Activated CD4-positive, alpha-beta T cell treated with anti-CD3 and anti-CD28 coated beads for 36 hours (primary cell): ENCODE measurements at regions of chr12 and their contacts with region 1.

Region 1: GRCh38 chr12:124917135-124917840 is 2.8 kb upstream of the UBC start:
- DNase-seq: peak; percentile 97
- ATAC-seq: peak; percentile 69
- H3K4me3 Mint-ChIP-seq: peak overlapping the region; percentile 100
- H3K27ac Mint-ChIP-seq: peak overlapping the region; percentile 100
- H3K4me1 Mint-ChIP-seq: peaks cover 86% of the 10 kb centered on the region
- H3K27me3 Mint-ChIP-seq: no peaks in the 10 kb centered on the region

Region 2: DNA sequence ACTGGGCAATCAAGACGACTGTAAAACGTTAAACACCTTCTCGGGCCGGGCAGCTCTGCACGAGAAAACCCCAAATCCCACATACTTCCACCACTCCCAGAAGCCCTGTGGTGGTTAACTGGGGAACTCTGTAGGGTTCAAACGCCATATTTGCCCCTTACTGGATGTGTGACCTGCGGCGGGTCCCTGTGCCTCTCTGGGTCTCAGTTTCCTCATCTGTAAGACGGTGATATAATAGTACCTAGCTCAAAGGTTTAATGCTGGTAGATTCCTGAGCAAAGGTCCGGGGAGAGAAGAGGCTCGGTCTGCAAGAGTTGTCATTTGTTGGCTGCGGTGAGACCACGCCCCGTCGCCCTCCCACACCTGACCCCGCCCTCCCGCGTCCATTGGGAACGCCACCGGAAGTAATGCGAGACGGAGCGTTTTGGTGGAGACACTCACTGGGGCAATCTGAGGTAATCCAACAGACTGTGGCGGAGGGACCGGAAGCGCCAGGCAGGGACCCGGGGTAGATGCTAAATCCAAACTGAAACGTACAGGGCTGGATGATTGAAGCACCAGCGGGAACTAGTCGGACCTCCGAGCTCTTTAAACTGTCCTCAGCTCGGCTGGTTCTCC is 1942.9 kb before region 1 on chr12:
- CTCF ChIA-PET with region 1: no interaction called
- POLR2A ChIA-PET with region 1: no interaction called
- intact Hi-C with region 1: loop called in 1 of 2 experiments (anchors 10 kb)
- DNase-seq: peak; percentile 99
- ATAC-seq: peak; percentile 86
- H3K4me3 Mint-ChIP-seq: peak overlapping the region; percentile 95
- H3K27ac Mint-ChIP-seq: peak overlapping the region; percentile 100
- H3K4me1 Mint-ChIP-seq: peaks cover 21% of the 10 kb centered on the region
- H3K27me3 Mint-ChIP-seq: no peaks in the 10 kb centered on the region

Region 3: GRCh38 chr12:123972457-123973401 is 944.6 kb before region 1 on chr12 and contains the starts of genes CCDC92 and ZNF664:
- CTCF ChIA-PET with region 1: no interaction called
- POLR2A ChIA-PET with region 1: no interaction called
- intact Hi-C with region 1: loop called in 1 of 2 experiments (anchors 2 kb)
- DNase-seq: peak; percentile 98
- ATAC-seq: peak; percentile 87
- H3K4me3 Mint-ChIP-seq: peak within 1 kb of the TSS; percentile 87
- H3K27ac Mint-ChIP-seq: peak within 1 kb of the TSS; percentile 89
- H3K4me1 Mint-ChIP-seq: peaks cover 48% of the 10 kb centered on the region
- H3K27me3 Mint-ChIP-seq: no peaks in the 10 kb centered on the region
- total RNA-seq, gene CCDC92: 8.7 to 11.0 TPM
- total RNA-seq, gene ZNF664: 46.4 to 48.3 TPM

Region 4: DNA sequence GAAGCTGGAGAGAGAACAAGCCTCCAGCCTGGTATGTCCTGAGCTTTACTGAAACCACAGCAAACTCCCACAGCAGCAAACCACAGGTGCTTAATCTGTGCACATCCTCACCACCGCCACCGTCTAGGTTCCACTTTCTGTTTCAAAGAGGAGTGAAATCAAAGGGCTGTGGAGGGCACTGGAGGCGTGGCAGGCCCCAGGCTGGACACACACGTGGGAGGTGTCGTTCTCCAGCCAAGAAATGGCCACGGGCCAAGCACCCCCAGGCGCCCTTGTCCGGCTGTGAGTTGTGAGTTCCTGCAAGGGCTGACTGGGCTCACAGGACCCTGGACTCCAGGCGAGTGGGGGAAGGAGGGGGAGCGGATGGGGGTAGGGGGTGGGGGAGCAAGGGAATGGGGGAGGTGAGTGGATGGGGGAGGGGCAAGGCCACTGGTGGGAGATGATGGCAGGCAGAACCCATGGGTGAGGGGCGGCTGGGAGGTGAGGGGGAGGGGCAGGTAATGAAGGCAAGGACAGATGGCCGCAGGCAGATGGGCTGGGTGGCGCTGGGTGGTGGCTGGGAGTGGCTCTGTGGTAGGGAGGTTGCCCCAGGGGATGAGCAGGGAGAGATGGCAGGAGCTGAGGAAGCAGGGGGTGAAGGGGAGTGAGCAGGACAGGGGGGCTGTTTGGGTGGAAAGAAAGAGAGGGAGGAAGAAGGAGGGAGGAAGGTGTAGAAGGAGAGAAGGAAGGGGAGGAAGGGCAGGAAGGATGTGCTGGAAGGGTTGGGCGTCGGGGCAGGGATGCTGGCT is 436.6 kb before region 1 on chr12:
- CTCF ChIA-PET with region 1: no interaction called
- POLR2A ChIA-PET with region 1: no interaction called
- intact Hi-C with region 1: no loop called
- DNase-seq: peak; percentile 80
- ATAC-seq: peak; percentile 85
- H3K4me3 Mint-ChIP-seq: no peak overlapping the region
- H3K27ac Mint-ChIP-seq: no peak overlapping the region
- H3K4me1 Mint-ChIP-seq: peaks cover 41% of the 10 kb centered on the region
- H3K27me3 Mint-ChIP-seq: no peaks in the 10 kb centered on the region

Region 5: GRCh38 chr12:124567661-124568373 is 349.5 kb before region 1 on chr12:
- CTCF ChIA-PET with region 1: no interaction called
- POLR2A ChIA-PET with region 1: interaction called, 7 read pairs
- intact Hi-C with region 1: loop called in 1 of 2 experiments (anchors 2 kb)
- DNase-seq: peak; percentile 89
- ATAC-seq: peak; percentile 72
- H3K4me3 Mint-ChIP-seq: peak overlapping the region; percentile 75
- H3K27ac Mint-ChIP-seq: peak overlapping the region; percentile 89
- H3K4me1 Mint-ChIP-seq: peaks cover 33% of the 10 kb centered on the region
- H3K27me3 Mint-ChIP-seq: no peaks in the 10 kb centered on the region

Region 6: GRCh38 chr12:124863416-124864325 is 53.6 kb before region 1 on chr12 and contains the start of gene SCARB1:
- CTCF ChIA-PET with region 1: no interaction called
- POLR2A ChIA-PET with region 1: no interaction called
- intact Hi-C with region 1: loop called in 1 of 2 experiments (anchors 5 kb)
- DNase-seq: peak; percentile 91
- ATAC-seq: peak; percentile 91
- H3K4me3 Mint-ChIP-seq: peak within 1 kb of the TSS; percentile 76
- H3K27ac Mint-ChIP-seq: peak within 1 kb of the TSS; percentile 89
- H3K4me1 Mint-ChIP-seq: peaks cover 21% of the 10 kb centered on the region
- H3K27me3 Mint-ChIP-seq: peaks cover 3% of the 10 kb centered on the region
- total RNA-seq, gene SCARB1: 22.9 to 24.1 TPM

Region 7: GRCh38 chr12:124927201-124928094 is 10.2 kb after region 1 on chr12:
- CTCF ChIA-PET with region 1: interaction called, 22 read pairs
- POLR2A ChIA-PET with region 1: interaction called, 9 read pairs
- intact Hi-C with region 1: loop called in 1 of 2 experiments (anchors 1 kb)
- DNase-seq: peak; percentile 96
- ATAC-seq: peak; percentile 81
- H3K4me3 Mint-ChIP-seq: peak overlapping the region; percentile 98
- H3K27ac Mint-ChIP-seq: peak overlapping the region; percentile 97
- H3K4me1 Mint-ChIP-seq: peaks cover 33% of the 10 kb centered on the region
- H3K27me3 Mint-ChIP-seq: peaks cover 2% of the 10 kb centered on the region

Region 8: DNA sequence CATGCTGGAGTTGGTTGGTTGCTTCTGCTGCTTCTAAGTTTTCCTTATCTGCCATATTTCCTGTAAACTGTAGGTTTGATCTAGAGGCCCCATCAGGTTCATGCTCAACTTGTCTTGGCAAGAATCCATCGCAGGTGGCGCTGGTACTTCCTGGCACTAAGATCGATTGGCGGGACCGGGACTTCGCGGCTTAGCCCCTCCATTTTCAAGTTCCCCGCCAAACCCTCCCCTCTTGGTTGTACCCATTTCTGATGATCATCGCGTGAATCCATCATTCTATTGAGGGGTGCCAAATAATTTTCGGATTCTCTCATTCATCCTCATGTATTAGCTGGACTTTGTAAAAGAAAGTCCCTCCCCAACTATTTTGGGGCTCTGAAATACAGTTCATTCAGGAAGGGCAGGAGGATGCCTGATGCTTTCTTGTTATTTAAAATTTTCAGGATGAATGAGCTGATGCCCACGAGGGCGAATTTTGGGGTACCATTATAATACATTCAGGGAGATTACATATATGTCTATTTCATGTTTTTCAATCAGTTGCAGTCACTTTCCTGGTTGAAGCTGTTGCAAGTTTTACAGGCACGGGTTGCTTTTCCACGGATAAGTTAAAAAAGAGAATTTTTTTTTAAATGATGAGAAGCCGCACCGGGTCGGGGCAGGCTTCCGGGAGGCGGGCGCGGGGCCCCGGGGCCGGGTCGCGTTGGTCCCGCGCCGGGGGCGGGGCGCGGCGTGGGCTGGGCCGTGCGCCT is 75.8 kb after region 1 on chr12:
- CTCF ChIA-PET with region 1: interaction called, 4 read pairs
- POLR2A ChIA-PET with region 1: interaction called, 3 read pairs
- intact Hi-C with region 1: loop called (anchors 1 to 5 kb)
- DNase-seq: peak; percentile 93
- ATAC-seq: peak; percentile 62
- H3K4me3 Mint-ChIP-seq: peak overlapping the region; percentile 81
- H3K27ac Mint-ChIP-seq: peak overlapping the region; percentile 99
- H3K4me1 Mint-ChIP-seq: peaks cover 25% of the 10 kb centered on the region
- H3K27me3 Mint-ChIP-seq: no peaks in the 10 kb centered on the region